ENCODE measurements at regions of chr12 and their contacts with region 1.

Region 1: DNA sequence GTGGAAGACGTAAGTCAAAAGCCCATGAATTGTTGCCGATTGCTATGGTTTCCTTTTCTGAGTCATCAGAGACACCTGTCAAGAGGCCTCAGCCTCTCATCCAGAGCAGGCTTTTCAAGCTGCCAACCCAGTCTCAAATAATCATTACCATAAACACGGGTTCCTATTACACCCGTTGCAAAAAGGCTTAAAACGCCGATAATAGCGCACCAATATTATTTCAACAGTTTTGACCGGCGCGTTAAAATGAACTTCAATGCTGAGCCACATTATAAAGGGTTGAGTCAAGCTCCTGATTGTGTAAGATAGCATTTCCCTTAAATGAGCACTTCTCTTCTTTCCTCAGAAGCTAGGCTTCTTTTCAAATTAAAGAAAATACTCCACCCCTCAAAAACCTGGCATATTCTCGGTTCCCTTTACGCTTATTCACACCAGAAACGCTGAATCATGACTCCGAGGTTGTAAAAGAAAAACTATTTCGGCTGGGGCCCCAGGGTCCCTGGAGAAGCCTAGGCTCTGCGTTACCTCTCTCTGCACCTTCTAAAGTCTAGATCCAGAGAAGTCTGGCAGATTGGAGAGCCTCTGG is 1.4 kb downstream of the TMTC1 start:
- DNase-seq: no peak

Region 2: DNA sequence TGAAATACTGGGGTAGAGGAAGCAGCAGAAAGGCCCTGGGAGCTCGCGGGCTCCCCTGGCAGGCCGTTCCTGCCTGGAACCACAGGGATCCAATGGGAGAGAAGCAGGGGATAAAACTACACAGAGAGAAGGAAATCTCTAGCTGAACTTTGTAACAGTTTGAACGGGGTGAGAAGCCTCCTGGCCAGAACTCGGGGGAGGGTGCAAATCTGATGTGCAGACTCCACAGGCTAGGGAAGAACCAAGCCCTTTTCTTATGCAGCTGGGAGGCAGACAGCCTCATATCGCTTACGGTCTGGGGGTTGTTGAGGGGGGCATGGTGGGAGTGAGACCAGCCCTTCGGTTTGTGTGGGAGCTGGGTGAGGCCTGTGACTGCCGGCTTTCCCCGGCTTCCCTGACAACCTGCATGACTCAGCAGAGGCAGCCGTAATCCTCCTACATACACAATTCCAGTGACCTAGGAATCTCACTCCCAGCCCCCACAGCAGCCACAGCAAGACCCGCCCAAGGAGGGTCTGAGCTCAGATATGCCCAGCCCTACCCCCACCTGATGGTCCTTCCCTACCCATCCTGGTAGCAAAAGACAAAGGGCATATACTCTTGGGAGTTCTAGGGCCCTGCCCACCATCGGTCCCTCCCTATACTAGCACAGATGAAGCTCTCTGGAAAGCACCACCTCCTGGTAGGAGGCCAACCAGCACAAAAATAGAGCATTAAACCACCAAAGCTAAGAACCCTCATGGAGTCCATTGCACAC is 141.6 kb before region 1 on chr12:
- intact Hi-C with region 1: loop called (anchors 2 kb)
- DNase-seq: peak; percentile 77

Region 3: GRCh38 chr12:29673346-29673745 is 109.0 kb before region 1 on chr12:
- intact Hi-C with region 1: no loop called
- DNase-seq: no peak

Region 4: GRCh38 chr12:29743801-29744200 is 38.6 kb before region 1 on chr12:
- intact Hi-C with region 1: loop called (anchors 2 kb)
- DNase-seq: no peak

Region 5: GRCh38 chr12:29843036-29843435 is 60.7 kb after region 1 on chr12:
- intact Hi-C with region 1: no loop called
- DNase-seq: no peak

Region 6: DNA sequence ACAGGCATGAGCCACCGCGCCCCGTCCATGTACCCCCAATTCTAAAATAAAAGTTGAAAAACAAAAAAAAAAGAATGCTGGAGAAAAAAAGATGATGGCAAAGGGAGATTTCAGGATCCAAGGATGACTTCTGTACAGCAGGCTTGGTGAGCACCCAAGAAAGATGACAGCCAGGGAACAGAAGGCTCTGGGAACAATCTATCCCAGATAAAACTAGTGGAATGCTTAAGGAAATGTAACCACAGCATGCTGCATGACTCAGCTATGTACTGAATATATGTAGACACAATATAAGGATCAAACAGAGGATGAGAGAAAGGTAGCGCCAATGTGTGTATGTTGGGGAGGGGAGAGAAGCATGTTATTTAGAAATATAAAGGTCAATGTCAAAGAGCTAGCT is 125.1 kb after region 1 on chr12:
- intact Hi-C with region 1: no loop called
- DNase-seq: no peak

Measured in cardiac septum (tissue), 1 donor.